ENCODE measurements at regions of chr5 and their contacts with region 1.

Region 1: DNA sequence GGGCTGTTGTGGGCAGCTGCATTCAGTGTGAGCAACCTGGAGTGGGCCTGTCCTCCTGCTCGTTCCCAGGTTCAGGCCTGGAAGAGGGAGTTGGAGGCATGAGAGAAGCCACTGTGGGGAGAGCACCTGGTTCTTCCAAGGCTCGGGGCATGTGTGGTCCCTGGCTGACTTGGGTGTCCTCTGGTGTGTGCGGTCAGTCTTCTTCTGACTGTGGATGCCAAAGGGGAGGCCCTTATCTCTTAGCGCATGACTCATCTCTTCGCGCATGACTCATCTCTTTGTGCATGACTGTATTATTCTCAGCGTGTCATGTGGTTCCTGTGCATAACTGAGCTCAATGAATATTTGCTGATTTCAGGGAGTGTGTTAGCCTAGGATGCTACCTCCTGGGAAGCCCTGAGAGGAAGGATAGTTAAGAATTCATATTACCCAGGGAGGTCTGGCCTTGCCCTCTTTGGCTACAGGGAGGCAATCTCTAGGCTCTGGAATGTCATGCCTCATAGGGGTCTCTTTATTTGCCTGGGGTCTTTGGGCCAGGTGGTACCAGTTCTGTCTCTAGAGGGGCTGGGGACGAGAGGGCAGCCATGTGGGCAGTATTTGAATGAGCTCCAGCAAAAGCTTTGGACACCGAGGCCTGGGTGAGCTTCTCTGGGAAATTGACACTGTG is 188.7 kb downstream of the HSPA4 start:
- DNase-seq: peak in 1 of 3 donors; percentile 39
- ATAC-seq: peak; percentile 69 to 90
- H3K4me3 ChIP-seq: no peak overlapping the region
- H3K27ac ChIP-seq: no peak overlapping the region
- H3K4me1 ChIP-seq: no peaks in the 10 kb centered on the region
- H3K27me3 ChIP-seq: no peaks in the 10 kb centered on the region

Region 2: GRCh38 chr5:132156413-132156812 is 1084.1 kb before region 1 on chr5:
- intact Hi-C with region 1: no loop called
- DNase-seq: no peak
- ATAC-seq: no peak
- H3K4me3 ChIP-seq: no peak overlapping the region
- H3K27ac ChIP-seq: no peak overlapping the region
- H3K4me1 ChIP-seq: no peaks in the 10 kb centered on the region
- H3K27me3 ChIP-seq: no peaks in the 10 kb centered on the region

Region 3: DNA sequence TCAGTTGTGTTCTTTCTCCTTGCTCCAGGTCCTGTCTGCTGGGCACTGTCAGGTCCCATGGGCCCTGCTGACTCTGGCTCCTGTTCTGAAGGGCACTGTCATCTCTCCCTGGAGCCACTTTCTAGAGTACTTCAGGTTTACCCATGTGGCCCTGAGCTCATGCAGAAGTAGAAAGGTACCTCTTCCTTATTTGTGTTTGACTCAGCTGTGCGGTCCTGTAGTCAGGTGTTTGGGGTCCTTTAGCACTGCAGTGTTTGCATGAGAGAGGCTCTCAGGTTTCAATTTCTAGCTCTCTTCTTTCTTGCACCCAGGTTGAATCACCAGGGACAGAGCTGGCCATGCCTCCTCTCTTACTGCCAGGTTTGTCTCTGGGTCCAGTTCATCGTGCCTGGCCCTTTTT is 117.3 kb before region 1 on chr5:
- intact Hi-C with region 1: loop called in 1 of 4 experiments (anchors 10 kb)
- DNase-seq: peak in 1 of 3 donors; percentile 5
- ATAC-seq: no peak
- H3K4me3 ChIP-seq: no peak overlapping the region
- H3K27ac ChIP-seq: no peak overlapping the region
- H3K4me1 ChIP-seq: no peaks in the 10 kb centered on the region
- H3K27me3 ChIP-seq: no peaks in the 10 kb centered on the region

Measured in right cardiac atrium (tissue), 5 donors.